A673 (cell line): ENCODE measurements at regions of chr1 and their contacts with region 1.

Region 1: DNA sequence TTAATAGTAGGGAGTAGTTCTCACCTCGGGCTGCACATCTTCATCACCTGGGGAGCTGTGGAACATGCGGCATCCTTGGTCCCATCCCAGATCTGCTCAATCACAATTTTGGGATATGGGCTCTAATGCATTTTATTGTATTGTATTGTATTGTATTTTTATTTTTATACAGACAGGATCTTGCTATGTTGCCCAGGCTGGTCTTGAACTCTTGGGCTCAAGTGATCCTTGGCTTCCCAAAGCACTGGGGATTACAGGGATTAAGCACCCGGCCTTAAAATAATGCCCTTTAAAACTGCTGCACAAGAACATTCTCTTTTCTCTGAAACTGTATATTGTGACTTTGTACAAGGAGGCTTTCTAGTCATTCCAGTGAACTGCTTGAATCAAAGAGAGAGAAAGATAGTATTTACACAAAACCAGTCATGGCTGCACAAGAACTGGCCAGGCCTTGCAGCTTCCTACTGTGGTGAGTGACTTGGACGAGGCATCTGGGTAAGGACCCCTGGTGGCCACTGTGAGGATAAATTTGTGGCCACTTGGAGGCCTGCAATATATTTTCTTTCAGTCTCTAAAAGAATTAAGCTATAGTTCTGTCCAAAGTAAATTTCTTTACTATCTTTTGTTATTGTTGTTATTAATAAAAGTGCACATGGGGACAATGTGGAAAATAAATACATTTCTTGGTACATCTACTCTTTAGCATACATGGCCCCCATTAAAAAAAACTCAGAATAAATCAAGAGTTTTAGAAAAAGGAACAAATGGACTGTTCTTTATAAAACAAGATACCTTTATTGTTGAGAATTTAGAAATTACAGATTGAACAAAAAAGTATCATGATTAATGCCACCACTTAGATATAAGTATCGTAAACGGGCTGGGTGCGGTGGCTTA is 48.0 kb downstream of the TBCE start:
- DNase-seq: peak; percentile 64
- H3K4me3 ChIP-seq: no peak overlapping the region
- H3K27ac ChIP-seq: no peak overlapping the region
- H3K4me1 ChIP-seq: no peaks in the 10 kb centered on the region
- H3K27me3 ChIP-seq: no peaks in the 10 kb centered on the region
- CTCF ChIP-seq: peak; percentile 58

Region 2: DNA sequence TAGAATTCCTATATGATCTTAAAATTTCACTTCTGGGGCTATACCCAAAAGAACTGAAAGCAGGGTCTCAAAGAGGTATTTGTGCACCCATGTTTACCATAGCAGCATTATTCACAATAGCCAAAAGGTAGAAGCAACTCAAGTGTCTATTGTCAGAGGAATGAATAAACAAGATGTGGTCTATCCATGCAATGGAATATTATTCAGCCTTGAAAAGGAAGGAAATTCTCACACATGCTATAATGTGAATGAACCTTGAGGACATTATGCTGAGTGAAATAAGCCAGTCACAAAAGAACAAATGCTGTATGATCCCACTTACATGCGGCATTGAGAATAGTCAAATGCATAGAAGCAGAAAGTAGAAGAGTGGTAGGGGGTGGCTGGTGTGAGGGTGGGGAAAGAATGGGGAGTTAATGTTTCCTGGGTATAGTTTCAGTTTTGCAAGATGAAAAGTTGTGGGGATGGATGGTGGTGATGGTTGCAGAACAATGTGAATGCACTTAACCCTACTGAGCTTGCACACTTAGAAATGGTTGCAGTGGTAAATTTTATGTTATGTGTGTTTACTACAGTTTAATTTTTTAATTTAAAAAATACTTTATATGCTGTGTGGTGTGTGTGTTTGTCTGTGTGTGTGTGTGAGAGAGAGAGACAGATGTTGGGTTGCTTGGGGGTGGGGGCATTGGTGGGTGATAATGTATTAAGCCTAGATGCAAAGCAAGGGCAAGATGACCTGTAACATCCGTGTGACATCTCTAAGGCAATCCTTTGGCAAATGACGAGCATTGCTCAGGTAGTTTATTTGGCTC is 408.9 kb before region 1 on chr1:
- CTCF ChIA-PET with region 1: no interaction called
- POLR2A ChIA-PET with region 1: no interaction called
- intact Hi-C with region 1: no loop called
- DNase-seq: no peak
- H3K4me3 ChIP-seq: no peak overlapping the region
- H3K27ac ChIP-seq: no peak overlapping the region
- H3K4me1 ChIP-seq: no peaks in the 10 kb centered on the region
- H3K27me3 ChIP-seq: no peaks in the 10 kb centered on the region
- CTCF ChIP-seq: no peak

Region 3: GRCh38 chr1:235100194-235100772 is 315.0 kb before region 1 on chr1:
- CTCF ChIA-PET with region 1: no interaction called
- POLR2A ChIA-PET with region 1: no interaction called
- intact Hi-C with region 1: loop called (anchors 5 kb)
- DNase-seq: no peak
- H3K4me3 ChIP-seq: no peak overlapping the region
- H3K27ac ChIP-seq: no peak overlapping the region
- H3K4me1 ChIP-seq: peaks cover 3% of the 10 kb centered on the region
- H3K27me3 ChIP-seq: no peaks in the 10 kb centered on the region
- CTCF ChIP-seq: no peak

Region 4: GRCh38 chr1:235199441-235199840 is 215.8 kb before region 1 on chr1:
- CTCF ChIA-PET with region 1: no interaction called
- POLR2A ChIA-PET with region 1: no interaction called
- intact Hi-C with region 1: loop called (anchors 1 kb)
- DNase-seq: peak; percentile 82
- H3K4me3 ChIP-seq: no peak overlapping the region
- H3K27ac ChIP-seq: peak overlapping the region; percentile 47
- H3K4me1 ChIP-seq: no peaks in the 10 kb centered on the region
- H3K27me3 ChIP-seq: no peaks in the 10 kb centered on the region
- CTCF ChIP-seq: peak; percentile 59

Region 5: DNA sequence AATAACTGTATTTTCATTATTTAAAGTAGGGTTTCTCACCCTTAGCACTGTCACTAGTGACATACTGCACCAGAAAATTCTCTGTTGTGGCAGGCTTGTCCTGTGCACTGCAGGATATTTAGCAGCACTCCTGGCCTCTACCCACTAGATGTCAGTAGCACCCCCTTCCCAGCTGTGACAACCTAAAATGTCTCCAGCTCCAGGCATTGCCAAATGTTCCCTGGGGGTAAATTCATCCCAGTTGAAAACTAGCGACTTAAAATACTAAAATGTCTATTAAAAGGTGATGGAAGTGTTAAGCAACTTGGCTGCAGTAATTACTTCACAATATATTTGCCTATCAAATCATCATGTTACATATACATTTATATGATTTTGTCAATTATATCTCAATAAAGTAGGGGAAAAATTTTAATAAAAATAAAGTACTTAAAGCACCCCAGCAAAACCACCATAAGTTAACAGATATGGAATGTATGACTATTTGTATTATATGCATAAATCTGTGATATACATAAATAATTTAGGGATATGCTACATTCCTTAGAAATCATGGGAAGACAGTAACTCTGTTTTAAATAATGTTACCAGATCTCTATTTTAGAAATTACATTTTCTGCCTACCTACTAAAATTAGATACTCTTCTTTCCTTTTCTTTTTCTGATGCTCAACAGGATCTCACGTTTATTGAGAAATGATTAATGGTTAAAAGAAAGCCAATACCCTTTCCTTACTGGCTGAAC is 161.9 kb before region 1 on chr1:
- CTCF ChIA-PET with region 1: interaction called, 8 read pairs
- POLR2A ChIA-PET with region 1: no interaction called
- intact Hi-C with region 1: loop called (anchors 1 kb)
- DNase-seq: peak; percentile 76
- H3K4me3 ChIP-seq: no peak overlapping the region
- H3K27ac ChIP-seq: no peak overlapping the region
- H3K4me1 ChIP-seq: no peaks in the 10 kb centered on the region
- H3K27me3 ChIP-seq: no peaks in the 10 kb centered on the region
- CTCF ChIP-seq: peak; percentile 70